Thyroid gland (tissue), 4 donors: ENCODE measurements at regions of chr1 and their contacts with region 1.

Region 1: DNA sequence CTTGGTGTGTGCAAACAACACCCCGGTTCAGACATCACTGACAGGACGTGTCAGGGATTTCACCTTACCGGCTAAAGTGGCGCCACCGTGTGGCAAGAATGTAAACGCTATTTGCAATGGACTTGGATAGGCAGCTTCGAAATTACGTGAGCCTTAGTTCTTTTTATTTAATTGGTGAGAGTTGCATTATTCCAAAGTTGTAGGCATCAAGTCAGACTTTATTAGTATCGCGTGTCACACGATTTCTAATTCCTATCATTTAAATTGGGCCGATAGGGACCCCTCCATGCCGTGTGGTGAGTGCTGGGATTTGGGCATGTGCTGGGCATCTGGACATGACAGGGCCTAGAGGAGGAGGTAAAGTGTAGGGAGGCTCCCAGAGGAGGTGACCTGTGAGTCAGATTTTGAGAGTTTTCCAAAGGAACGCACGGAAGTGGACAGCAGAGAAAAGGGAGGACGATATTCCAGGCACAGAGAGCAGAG is 14.5 kb upstream of the CPT2 start:
- DNase-seq: peak; percentile 85 to 92
- H3K4me3 ChIP-seq: no peak overlapping the region
- H3K27ac ChIP-seq: no peak overlapping the region
- H3K4me1 ChIP-seq: peaks cover 5 to 9% of the 10 kb centered on the region in 2 donors
- H3K27me3 ChIP-seq: no peaks in the 10 kb centered on the region
- CTCF ChIP-seq: peak; percentile 73 to 86 (median 84)
- POLR2A ChIP-seq: no peak

Region 2: GRCh38 chr1:52795464-52795863 is 386.7 kb before region 1 on chr1:
- intact Hi-C with region 1: no loop called
- DNase-seq: no peak
- H3K4me3 ChIP-seq: no peak overlapping the region
- H3K27ac ChIP-seq: no peak overlapping the region
- H3K4me1 ChIP-seq: no peaks in the 10 kb centered on the region
- H3K27me3 ChIP-seq: no peaks in the 10 kb centered on the region
- CTCF ChIP-seq: no peak
- POLR2A ChIP-seq: no peak

Region 3: DNA sequence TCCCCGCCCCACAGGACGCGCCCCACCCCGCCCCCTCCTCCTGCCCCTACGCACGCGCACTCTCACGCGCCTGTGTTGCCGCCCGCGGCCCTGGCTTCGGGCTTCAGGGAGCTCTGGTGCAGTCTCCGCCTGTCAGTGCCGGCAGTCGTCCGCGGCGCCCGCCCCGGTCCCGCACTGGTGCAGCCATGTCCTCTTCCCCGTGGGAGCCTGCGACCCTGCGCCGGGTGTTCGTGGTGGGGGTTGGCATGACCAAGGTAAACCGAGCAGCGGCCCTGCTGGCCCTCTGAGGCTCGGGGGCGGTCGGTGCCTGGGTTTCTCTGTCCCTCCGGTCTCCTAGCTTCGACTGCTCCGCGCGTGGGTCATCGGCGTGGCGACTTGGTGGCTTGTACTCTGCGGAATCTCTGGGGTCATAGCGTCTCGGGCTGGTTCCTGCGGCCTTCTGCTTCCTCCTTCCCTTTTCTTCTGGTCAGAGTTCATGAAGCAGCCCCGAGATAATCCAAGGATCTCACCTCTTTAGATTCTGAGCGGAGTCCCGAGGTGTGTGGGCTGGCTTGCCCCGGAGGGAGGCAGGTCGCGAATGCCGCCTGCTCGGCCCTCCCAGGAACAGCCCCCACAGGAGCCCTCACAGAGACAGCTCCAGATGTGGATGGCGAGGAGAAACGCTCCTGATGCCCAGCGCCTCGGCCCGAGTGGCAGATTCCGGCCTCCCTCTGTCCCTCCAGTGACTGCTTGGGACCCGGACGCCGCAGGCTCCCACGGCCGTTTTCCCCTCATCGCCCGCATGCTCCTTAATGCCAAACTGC is 254.7 kb before region 1 on chr1 and contains the start of gene SCP2:
- intact Hi-C with region 1: loop called (anchors 10 kb)
- DNase-seq: peak; percentile 75 to 82
- H3K4me3 ChIP-seq: peak within 1 kb of the TSS; percentile 24 to 65 (median 53)
- H3K27ac ChIP-seq: peak within 1 kb of the TSS in 2 of 3 donors; percentile 54 to 69
- H3K4me1 ChIP-seq: peaks cover 11 to 24% of the 10 kb centered on the region in 2 donors
- H3K27me3 ChIP-seq: no peaks in the 10 kb centered on the region
- CTCF ChIP-seq: no peak
- POLR2A ChIP-seq: peak in 1 of 2 donors; percentile 74
- total RNA-seq, gene SCP2: 114 to 181 (median 164) TPM

Region 4: GRCh38 chr1:53246261-53247134 is 64.3 kb after region 1 on chr1:
- intact Hi-C with region 1: no loop called
- DNase-seq: no peak
- H3K4me3 ChIP-seq: no peak overlapping the region
- H3K27ac ChIP-seq: no peak overlapping the region
- H3K4me1 ChIP-seq: peaks cover 8 to 21% of the 10 kb centered on the region in 2 donors
- H3K27me3 ChIP-seq: no peaks in the 10 kb centered on the region
- CTCF ChIP-seq: no peak
- POLR2A ChIP-seq: no peak

Region 5: GRCh38 chr1:53739109-53739681 is 557.0 kb after region 1 on chr1 and contains the start of gene GLIS1:
- intact Hi-C with region 1: no loop called
- DNase-seq: peak; percentile 79 to 85
- H3K4me3 ChIP-seq: peak within 1 kb of the TSS; percentile 31 to 49 (median 43)
- H3K27ac ChIP-seq: no peak within 1 kb of the TSS
- H3K4me1 ChIP-seq: peaks cover 16 to 21% of the 10 kb centered on the region in 2 donors
- H3K27me3 ChIP-seq: no peaks in the 10 kb centered on the region
- CTCF ChIP-seq: no peak
- POLR2A ChIP-seq: no peak
- total RNA-seq, gene GLIS1: 0.29 TPM in 1 of 4 donors, not detected in the others